RWPE1 (cell line): ENCODE measurements at regions of chr14 and their contacts with region 1.

Region 1: DNA sequence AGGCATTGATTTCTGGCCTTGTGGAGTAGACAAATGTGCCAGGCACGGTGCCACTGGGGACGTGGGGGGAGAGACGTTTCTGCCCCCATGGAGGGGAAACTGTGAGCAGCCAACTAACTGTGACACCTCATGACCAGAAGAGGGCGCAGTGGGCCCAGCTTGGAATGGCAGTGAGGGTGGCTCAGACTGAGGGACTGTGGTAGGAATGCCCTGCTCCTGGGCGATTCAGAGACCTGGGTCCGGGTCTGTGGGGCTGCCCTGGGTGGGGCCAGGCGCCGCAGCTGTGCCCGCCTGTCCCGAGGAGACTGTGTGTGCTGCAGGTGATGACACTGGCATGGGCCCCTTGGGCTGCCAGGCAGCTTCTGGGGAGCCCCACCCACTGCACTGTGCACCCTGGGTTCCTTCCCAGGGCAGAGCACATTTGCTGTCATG is 60.6 kb downstream of the SLC25A47 start:
- DNase-seq: peak; percentile 49
- H3K27ac ChIP-seq: peak overlapping the region; percentile 38
- CTCF ChIP-seq: peak; percentile 82

Region 2: DNA sequence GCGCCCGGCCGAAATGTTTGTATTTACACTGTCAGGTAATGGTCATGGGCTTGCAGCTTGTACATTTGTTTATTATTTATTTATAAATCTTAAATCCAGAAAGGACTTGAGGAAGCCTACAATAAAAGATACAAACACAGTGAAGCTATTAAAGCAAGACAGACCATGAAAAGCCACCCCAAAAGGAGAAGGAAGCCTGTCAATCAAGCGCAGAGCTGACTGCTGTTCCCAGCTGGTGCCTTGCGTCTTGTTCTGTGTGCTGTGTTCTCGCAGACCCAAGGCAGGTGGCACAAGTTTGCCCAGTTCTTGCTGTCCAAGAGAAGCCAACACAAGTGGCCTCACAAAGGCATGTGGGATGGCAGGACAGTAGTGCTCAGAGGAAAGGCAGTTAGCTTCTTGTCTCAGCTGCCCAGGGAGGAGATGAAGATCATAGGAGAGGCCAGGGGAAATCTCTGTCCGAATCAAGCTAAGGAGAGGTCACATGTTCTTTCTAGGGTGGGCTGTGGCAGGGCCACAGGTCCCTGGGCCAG is 12.6 kb after region 1 on chr14:
- CTCF ChIA-PET with region 1: interaction called, 13 read pairs
- POLR2A ChIA-PET with region 1: no interaction called
- DNase-seq: no peak
- H3K27ac ChIP-seq: peak overlapping the region; percentile 19; the same call in 1 of the 2 replicates
- CTCF ChIP-seq: no peak

Region 3: DNA sequence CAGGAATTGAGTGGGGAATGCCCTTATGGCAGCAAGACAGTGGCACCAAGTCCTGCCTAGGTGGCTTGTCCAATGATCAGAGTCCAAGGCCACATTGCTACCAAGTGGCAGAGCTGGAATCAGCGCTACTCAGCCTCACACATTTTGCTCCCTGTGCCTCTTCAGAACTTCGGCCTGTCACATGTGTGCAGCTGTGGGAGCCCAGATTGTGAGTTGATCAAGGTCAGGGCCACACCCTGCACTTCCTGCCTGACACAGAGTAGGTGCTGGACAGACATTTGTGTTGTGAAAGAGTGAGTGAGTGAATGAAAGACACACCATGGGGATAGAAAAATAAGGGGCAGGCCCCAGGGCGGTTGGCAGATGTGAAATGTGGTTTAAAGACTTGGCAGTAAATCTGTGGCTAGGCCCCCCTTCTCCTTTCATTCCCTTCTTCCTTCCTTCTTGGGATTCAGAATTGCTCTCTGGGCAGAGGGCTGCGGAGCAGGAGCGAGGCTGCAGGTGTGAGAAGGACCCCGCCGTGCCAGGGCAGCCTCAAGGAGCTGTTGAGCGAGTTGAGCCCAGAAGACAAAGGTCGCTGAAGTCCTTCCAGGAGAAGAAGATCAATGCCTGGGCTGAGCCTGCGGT is 22.9 kb after region 1 on chr14:
- CTCF ChIA-PET with region 1: interaction called, 10 read pairs
- POLR2A ChIA-PET with region 1: no interaction called
- DNase-seq: peak; percentile 36
- H3K27ac ChIP-seq: peak overlapping the region; percentile 73
- CTCF ChIP-seq: no peak

Region 4: GRCh38 chr14:100417466-100417865 is 33.7 kb after region 1 on chr14:
- CTCF ChIA-PET with region 1: interaction called, 22 read pairs
- POLR2A ChIA-PET with region 1: no interaction called
- DNase-seq: peak; percentile 90
- H3K27ac ChIP-seq: peak overlapping the region; percentile 60
- CTCF ChIP-seq: peak; percentile 56

Region 5: DNA sequence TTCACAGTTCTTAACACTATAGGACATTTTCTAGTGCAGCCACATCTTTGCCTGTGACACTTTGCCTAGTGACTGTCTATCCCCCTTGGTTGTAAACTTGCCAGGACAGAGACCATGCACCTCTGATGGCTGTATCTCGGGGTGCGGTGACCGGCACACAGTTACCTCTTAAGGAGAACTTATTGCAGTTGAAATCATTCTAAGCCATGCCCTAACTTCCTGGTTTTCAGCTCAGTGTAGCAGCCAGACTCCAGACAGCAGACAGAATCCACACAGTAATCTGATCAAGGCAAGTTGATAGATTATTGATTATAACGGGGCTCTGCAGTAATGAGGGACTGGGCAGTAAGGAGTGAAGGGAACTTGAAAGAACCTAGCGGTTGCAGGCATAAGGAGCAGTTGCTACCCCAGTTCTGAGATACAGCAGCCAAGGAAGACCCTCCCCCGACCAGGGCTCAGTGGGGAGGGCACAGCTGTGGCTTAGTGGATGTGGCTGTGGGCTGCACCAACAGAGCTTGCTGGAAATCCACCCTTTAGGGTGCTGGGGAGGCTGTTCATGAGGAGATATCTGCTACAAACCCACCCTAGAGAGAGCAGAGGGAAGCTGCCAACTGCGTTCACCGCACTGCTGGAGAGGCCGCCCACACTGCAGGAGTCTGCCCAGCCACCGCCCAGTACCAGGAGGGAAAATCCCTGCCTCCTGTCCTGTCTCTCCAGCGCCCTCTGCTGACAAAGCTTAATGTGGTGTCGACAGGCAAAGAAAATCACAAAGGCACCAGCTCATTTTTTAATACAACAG is 261.6 kb after region 1 on chr14:
- CTCF ChIA-PET with region 1: interaction called, 46 read pairs
- POLR2A ChIA-PET with region 1: no interaction called
- DNase-seq: peak; percentile 84
- H3K27ac ChIP-seq: no peak overlapping the region
- CTCF ChIP-seq: peak; percentile 84

Region 6: DNA sequence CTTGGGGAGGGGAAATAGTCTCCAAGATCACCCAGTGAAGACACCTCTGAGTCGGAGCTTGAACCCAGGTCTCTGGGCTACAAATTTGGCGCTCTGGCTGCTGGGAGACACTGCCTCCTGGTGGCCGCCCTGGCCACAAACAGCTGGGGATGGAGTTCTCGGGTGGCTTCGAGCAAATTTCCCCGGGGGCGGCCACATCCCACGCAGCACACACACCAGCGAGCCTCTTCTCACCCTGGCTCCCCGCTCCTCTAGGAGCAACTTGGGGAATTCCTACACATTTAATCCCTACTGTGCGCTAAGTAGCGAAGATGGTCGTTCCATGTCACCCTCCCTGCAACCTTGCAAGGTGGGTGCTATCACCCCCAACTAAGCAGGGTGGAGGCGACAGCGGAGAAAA is 269.7 kb after region 1 on chr14:
- CTCF ChIA-PET with region 1: interaction called, 10 read pairs
- POLR2A ChIA-PET with region 1: no interaction called
- DNase-seq: no peak
- H3K27ac ChIP-seq: no peak overlapping the region
- CTCF ChIP-seq: peak; percentile 17; the same call in 1 of the 2 replicates